ENCODE measurements at regions of chr1 and their contacts with region 1.

Region 1: GRCh38 chr1:109548321-109549267 is at the start of gene GNAI3:
- DNase-seq: peak; percentile 91 to 98 (median 95)
- ATAC-seq: peak; percentile 90
- H3K4me3 ChIP-seq: peak within 1 kb of the TSS; percentile 73
- H3K4me3 Mint-ChIP-seq: peak within 1 kb of the TSS; percentile 99
- H3K27ac ChIP-seq: peak within 1 kb of the TSS; percentile 87 to 92
- H3K27ac Mint-ChIP-seq: peak within 1 kb of the TSS; percentile 97
- H3K4me1 ChIP-seq: peaks cover 21% of the 10 kb centered on the region
- H3K4me1 Mint-ChIP-seq: peaks cover 57% of the 10 kb centered on the region
- H3K27me3 ChIP-seq: no peaks in the 10 kb centered on the region
- H3K27me3 Mint-ChIP-seq: no peaks in the 10 kb centered on the region
- CTCF ChIP-seq: no peak
- total RNA-seq, gene GNAI3: 5.1 to 5.4 TPM

Region 2: DNA sequence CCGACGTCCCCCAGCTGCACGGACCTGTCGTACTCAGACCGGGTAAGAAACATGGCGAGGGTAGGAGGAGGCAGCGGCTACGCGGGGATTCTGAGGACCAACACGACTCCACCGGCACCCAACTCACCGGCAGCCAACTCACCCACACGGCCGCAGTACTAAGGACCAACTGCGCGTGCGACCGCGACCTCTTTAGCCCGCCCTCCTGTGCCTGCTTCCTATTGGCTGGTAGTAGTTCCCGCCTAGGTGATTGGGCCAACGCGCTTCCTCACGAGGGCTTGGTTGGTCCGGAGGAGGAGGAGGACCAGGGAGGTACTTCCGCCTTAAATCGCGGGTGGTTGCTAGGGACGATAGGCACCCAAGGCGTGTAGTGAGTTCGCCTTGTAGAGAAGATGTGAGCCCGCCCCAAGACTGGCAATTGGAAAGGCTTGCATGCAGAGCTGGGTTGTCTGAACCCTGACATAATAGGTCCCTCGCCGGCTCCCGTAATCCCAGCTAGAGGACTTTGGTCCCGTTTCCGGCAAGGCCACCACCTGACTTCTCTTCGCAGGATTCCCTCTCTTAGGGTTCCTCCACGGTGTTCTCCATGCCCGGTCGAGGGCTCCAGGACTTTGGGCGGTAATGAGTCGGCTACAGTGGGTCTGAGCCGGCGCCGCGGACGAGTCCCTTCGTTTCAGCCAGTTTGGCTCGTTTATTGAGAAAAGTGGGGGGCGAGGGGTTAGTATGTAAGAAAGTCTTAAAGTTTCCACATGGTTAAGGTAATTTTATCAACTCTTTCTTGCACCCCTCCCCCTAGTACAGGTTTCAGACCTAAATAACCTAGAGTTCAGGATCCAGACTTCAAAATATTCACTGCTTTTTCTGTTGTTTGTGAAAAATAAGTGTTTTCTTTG is 122.1 kb before region 1 on chr1 and contains the start of gene PSMA5:
- CTCF ChIA-PET with region 1: no interaction called
- POLR2A ChIA-PET with region 1: interaction called, 18 read pairs
- intact Hi-C with region 1: loop called in 1 of 2 experiments (anchors 5 kb)
- DNase-seq: peak; percentile 87 to 99 (median 92)
- ATAC-seq: peak; percentile 91
- H3K4me3 ChIP-seq: peak within 1 kb of the TSS; percentile 98
- H3K4me3 Mint-ChIP-seq: peak within 1 kb of the TSS; percentile 98
- H3K27ac ChIP-seq: peak within 1 kb of the TSS; percentile 91 to 95
- H3K27ac Mint-ChIP-seq: peak within 1 kb of the TSS; percentile 98
- H3K4me1 ChIP-seq: peaks cover 33% of the 10 kb centered on the region
- H3K4me1 Mint-ChIP-seq: peaks cover 52% of the 10 kb centered on the region
- H3K27me3 ChIP-seq: no peaks in the 10 kb centered on the region
- H3K27me3 Mint-ChIP-seq: no peaks in the 10 kb centered on the region
- CTCF ChIP-seq: no peak
- total RNA-seq, gene PSMA5: 29.8 to 33.8 TPM

Region 3: GRCh38 chr1:109499661-109500536 is 48.7 kb before region 1 on chr1:
- CTCF ChIA-PET with region 1: interaction called, 5 read pairs
- POLR2A ChIA-PET with region 1: interaction called, 13 read pairs
- intact Hi-C with region 1: no loop called
- DNase-seq: peak; percentile 27 to 84 (median 67)
- ATAC-seq: peak; percentile 32
- H3K4me3 ChIP-seq: no peak overlapping the region
- H3K4me3 Mint-ChIP-seq: peak overlapping the region; percentile 54
- H3K27ac ChIP-seq: peak overlapping the region; percentile 90 to 94
- H3K27ac Mint-ChIP-seq: peak overlapping the region; percentile 95
- H3K4me1 ChIP-seq: peaks cover 99% of the 10 kb centered on the region
- H3K4me1 Mint-ChIP-seq: peaks cover 93% of the 10 kb centered on the region
- H3K27me3 ChIP-seq: no peaks in the 10 kb centered on the region
- H3K27me3 Mint-ChIP-seq: no peaks in the 10 kb centered on the region
- CTCF ChIP-seq: peak; percentile 58

Region 4: GRCh38 chr1:109570417-109570827 is 21.8 kb after region 1 on chr1:
- CTCF ChIA-PET with region 1: interaction called, 7 read pairs
- POLR2A ChIA-PET with region 1: interaction called, 11 read pairs
- intact Hi-C with region 1: no loop called
- DNase-seq: no peak
- ATAC-seq: no peak
- H3K4me3 ChIP-seq: no peak overlapping the region
- H3K4me3 Mint-ChIP-seq: no peak overlapping the region
- H3K27ac ChIP-seq: no peak overlapping the region
- H3K27ac Mint-ChIP-seq: no peak overlapping the region
- H3K4me1 ChIP-seq: peaks cover 12% of the 10 kb centered on the region
- H3K4me1 Mint-ChIP-seq: peaks cover 26% of the 10 kb centered on the region
- H3K27me3 ChIP-seq: no peaks in the 10 kb centered on the region
- H3K27me3 Mint-ChIP-seq: no peaks in the 10 kb centered on the region
- CTCF ChIP-seq: no peak

Region 5: DNA sequence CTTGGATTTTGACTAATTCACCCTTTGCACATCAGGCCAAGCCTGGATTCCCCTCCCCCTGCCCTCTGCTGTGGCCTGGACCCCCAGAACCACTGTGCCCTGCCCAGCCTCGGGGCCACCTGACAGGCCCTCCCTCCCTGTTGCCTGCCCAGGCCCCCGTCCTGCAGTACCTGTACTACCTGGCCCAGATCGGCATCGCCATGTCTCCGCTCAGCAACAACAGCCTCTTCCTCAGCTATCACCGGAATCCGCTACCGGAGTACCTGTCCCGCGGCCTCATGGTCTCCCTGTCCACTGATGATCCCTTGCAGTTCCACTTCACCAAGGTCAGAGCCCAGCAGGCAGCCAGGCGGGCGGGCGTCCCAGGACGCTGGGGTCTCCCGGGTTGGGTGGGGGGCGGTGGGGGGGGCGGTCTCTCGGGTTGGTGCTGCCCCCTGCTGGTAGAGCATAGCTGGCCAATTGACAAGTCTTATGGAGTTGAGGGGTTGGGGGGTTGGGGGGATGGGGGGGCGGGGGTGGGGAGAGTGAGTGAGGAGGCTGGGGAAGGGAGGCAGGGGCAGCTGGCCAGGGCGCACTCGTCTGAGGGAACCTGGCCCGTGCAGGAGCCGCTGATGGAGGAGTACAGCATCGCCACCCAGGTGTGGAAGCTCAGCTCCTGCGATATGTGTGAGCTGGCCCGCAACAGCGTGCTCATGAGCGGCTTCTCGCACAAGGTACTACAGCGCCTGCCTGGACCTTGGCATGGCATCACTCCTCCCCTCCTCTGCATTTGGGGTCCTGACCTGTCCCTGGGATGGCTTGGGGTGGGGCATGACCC is 81.7 kb after region 1 on chr1:
- CTCF ChIA-PET with region 1: interaction called, 14 read pairs
- POLR2A ChIA-PET with region 1: interaction called, 7 read pairs
- intact Hi-C with region 1: loop called (anchors 1 kb)
- DNase-seq: peak in 11 of 14 experiments; percentile 26 to 69 (median 35)
- ATAC-seq: no peak
- H3K4me3 ChIP-seq: no peak overlapping the region
- H3K4me3 Mint-ChIP-seq: no peak overlapping the region
- H3K27ac ChIP-seq: no peak overlapping the region
- H3K27ac Mint-ChIP-seq: no peak overlapping the region
- H3K4me1 ChIP-seq: peaks cover 9% of the 10 kb centered on the region
- H3K4me1 Mint-ChIP-seq: peaks cover 21% of the 10 kb centered on the region
- H3K27me3 ChIP-seq: no peaks in the 10 kb centered on the region
- H3K27me3 Mint-ChIP-seq: no peaks in the 10 kb centered on the region
- CTCF ChIP-seq: peak; percentile 24

Region 6: GRCh38 chr1:109773146-109773899 is 224.7 kb after region 1 on chr1:
- CTCF ChIA-PET with region 1: interaction called, 20 read pairs
- POLR2A ChIA-PET with region 1: interaction called, 8 read pairs
- intact Hi-C with region 1: loop called (anchors 1 kb)
- DNase-seq: peak; percentile 50 to 87 (median 62)
- ATAC-seq: peak; percentile 88
- H3K4me3 ChIP-seq: no peak overlapping the region
- H3K4me3 Mint-ChIP-seq: no peak overlapping the region
- H3K27ac ChIP-seq: no peak overlapping the region
- H3K27ac Mint-ChIP-seq: no peak overlapping the region
- H3K4me1 ChIP-seq: peaks cover 21% of the 10 kb centered on the region
- H3K4me1 Mint-ChIP-seq: peaks cover 12% of the 10 kb centered on the region
- H3K27me3 ChIP-seq: no peaks in the 10 kb centered on the region
- H3K27me3 Mint-ChIP-seq: no peaks in the 10 kb centered on the region
- CTCF ChIP-seq: peak; percentile 66

Region 7: GRCh38 chr1:110034451-110035235 is 486.0 kb after region 1 on chr1 and contains the start of gene STRIP1:
- CTCF ChIA-PET with region 1: interaction called, 4 read pairs
- POLR2A ChIA-PET with region 1: interaction called, 16 read pairs
- intact Hi-C with region 1: no loop called
- DNase-seq: peak; percentile 85 to 98 (median 89)
- ATAC-seq: peak; percentile 95
- H3K4me3 ChIP-seq: peak within 1 kb of the TSS; percentile 84
- H3K4me3 Mint-ChIP-seq: peak within 1 kb of the TSS; percentile 98
- H3K27ac ChIP-seq: peak within 1 kb of the TSS; percentile 37 to 64
- H3K27ac Mint-ChIP-seq: peak within 1 kb of the TSS; percentile 81
- H3K4me1 ChIP-seq: peaks cover 41% of the 10 kb centered on the region
- H3K4me1 Mint-ChIP-seq: peaks cover 56% of the 10 kb centered on the region
- H3K27me3 ChIP-seq: no peaks in the 10 kb centered on the region
- H3K27me3 Mint-ChIP-seq: no peaks in the 10 kb centered on the region
- CTCF ChIP-seq: no peak
- total RNA-seq, gene STRIP1: 74.3 to 80.9 TPM

Region 8: DNA sequence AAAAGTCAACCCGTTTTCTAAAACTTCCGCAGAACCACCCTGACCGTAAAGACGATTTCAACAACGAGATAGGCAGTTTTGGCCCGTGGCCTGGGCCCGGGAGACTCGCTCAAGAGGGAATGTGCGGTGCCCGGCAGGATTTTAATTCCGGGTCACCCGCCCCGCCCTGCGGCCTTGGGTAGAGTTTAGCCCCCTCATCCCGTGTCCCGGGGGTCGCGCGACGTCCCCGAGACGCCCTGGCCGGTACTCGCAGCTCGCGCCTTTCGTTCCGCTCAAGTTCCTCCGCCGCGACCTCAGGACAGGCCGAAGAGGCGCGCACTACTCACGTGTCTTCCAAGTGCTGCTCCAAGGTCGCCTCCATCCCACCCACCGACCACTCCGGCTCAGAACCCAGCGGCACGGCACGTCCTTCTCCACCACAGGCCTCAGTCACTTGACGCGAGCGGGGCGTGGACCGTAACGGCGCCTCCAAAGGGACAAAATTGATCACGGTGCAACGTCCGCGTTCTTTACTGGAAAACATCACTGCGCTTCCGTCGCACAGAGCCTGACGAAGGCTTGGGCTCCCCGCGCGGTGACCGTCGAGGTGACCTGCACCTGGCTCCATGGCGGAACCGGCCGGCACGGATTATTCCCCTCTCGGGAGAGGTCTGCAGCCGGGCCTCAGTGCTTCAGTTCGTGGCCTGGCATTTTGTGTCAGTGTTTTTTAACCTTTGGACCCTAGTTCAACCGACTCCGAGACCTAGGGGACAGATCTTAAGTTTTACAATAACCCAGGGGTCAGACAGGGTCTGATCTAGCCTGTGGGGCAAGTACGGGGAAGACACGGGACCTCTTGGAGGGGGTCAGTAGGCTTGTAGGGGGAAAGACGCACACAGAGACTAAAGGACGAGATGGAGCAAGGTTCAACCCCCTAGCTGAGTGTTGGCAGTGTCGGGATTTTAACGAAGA is 858.9 kb after region 1 on chr1 and contains the start of gene LAMTOR5:
- CTCF ChIA-PET with region 1: no interaction called
- POLR2A ChIA-PET with region 1: no interaction called
- intact Hi-C with region 1: no loop called
- DNase-seq: peak; percentile 79 to 95 (median 86)
- ATAC-seq: peak; percentile 94
- H3K4me3 ChIP-seq: peak within 1 kb of the TSS; percentile 90
- H3K4me3 Mint-ChIP-seq: peak within 1 kb of the TSS; percentile 99
- H3K27ac ChIP-seq: peak within 1 kb of the TSS; percentile 84 to 88
- H3K27ac Mint-ChIP-seq: peak within 1 kb of the TSS; percentile 99
- H3K4me1 ChIP-seq: peaks cover 26% of the 10 kb centered on the region
- H3K4me1 Mint-ChIP-seq: peaks cover 38% of the 10 kb centered on the region
- H3K27me3 ChIP-seq: no peaks in the 10 kb centered on the region
- H3K27me3 Mint-ChIP-seq: no peaks in the 10 kb centered on the region
- CTCF ChIP-seq: no peak
- total RNA-seq, gene LAMTOR5: 105 to 108 TPM

Measured in CD4-positive, alpha-beta T cell (primary cell).